GM23248 (cell line): ENCODE measurements at regions of chr10 and their contacts with region 1.

Region 1: DNA sequence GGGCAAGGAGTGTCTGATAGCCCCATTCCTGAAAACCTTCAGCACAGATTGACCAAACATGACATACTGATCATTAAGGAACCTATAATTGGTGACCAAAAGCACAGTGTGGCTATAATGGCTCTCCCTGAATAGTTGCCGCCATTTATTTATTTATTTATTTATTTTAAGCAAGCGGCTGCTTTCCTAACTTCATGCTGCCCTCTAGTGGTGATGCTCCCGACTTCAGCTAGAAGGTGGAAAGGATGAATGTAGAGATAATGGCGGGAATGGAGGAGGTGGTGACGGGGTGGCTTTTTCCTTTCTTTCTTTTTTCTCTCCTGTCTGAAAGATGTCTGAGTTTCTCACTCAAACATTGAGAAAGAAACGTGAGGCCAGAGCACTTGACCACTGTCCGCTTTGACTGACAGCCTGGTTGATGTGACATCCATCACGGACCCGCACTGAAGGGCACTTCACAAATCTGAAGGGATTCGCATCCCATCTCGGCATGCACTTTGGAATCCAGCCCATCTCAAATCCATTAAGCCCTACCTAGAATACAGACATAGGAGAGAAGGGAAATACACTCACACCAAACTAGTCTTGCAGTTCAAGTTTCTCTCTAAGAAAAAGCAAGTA is 1090.1 kb downstream of the KCNMA1 start:
- DNase-seq: peak; percentile 83
- H3K4me3 ChIP-seq: no peak overlapping the region
- H3K27ac ChIP-seq: no peak overlapping the region
- H3K4me1 ChIP-seq: peaks cover 10% of the 10 kb centered on the region
- H3K27me3 ChIP-seq: no peaks in the 10 kb centered on the region; the same call in 1 of the 2 replicates

Region 2: DNA sequence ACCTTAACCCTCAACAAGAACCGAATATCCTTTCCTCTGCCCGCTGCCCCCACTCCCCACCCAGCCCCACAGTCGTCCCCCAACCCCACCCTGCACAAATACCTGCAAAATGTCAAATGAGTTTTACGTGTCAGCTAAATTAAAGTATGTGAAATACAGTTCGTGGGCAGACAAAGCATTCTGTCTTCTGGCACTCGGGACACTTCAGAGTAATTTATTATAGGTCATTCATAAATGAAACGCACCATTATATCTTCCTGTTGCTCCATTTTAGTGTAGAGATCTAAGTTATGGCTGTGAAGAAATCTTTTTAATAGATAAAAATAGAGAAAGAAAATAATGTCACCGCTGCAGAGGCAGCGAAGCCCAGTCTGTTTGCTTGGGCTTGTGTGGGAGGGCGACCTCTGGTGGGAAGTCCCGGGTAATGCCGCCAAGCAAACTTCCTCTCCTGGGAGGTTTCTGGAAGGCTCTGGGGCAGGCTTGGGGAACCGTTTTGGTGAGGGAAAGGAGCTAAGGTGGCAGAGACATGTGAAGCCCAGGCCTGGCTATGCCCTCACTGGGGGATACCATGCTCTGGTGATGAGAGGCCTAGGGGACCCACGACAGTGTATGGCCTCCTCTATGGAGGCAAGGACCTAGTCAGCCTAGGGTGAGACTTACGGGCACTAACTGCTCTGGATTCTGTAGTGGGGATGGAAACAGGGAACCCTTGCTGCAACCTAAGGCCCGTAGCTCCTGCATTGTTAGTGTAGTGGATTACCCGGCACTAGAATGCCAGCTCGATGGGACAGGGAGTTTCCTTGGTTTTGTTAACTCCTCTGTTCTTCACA is 511.1 kb before region 1 on chr10:
- in situ Hi-C with region 1: loop called (anchors 25 kb)
- DNase-seq: peak; percentile 77
- H3K4me3 ChIP-seq: no peak overlapping the region
- H3K27ac ChIP-seq: no peak overlapping the region
- H3K4me1 ChIP-seq: peaks cover 23% of the 10 kb centered on the region
- H3K27me3 ChIP-seq: no peaks in the 10 kb centered on the region

Region 3: GRCh38 chr10:76315240-76315639 is 232.2 kb before region 1 on chr10:
- in situ Hi-C with region 1: loop called (anchors 5 kb)
- DNase-seq: no peak
- H3K4me3 ChIP-seq: no peak overlapping the region
- H3K27ac ChIP-seq: no peak overlapping the region
- H3K4me1 ChIP-seq: peaks cover 9% of the 10 kb centered on the region
- H3K27me3 ChIP-seq: no peaks in the 10 kb centered on the region

Region 4: DNA sequence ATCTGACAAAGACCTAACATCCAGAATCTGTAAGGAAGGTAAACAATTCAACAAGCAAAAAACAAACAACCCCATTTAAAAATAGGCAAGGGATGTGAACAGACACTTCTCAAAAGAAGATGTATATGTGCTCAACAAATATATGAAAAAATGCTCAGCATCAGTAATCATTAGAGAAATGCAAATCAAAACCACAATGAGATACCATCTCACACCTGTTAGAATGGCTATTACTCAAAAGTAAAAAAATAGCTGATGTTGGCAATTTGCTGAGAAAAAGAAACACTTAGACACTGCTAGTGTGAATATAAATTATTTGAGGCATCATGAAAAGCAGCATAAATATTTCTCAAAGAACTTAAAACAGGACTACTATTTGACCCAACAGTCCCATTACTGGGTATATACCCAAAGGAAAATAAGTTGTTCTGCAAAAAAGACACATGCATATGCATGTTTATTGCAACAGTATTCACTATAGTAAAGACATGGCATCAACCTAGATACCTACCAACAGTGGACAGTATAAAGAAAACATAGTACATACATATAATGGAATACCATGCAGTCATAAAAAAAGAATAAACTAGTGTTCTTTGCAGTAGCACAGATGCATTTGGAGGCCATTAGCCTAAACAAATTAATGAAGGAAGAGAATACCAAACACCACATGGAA is 110.0 kb after region 1 on chr10:
- in situ Hi-C with region 1: no loop called
- DNase-seq: no peak
- H3K4me3 ChIP-seq: no peak overlapping the region
- H3K27ac ChIP-seq: no peak overlapping the region
- H3K4me1 ChIP-seq: no peaks in the 10 kb centered on the region
- H3K27me3 ChIP-seq: peaks cover 13% of the 10 kb centered on the region; the same call in 1 of the 2 replicates